Activated naive CD4-positive, alpha-beta T cell treated with anti-CD3 and anti-CD28 coated beads for 36 hours (primary cell): ENCODE measurements at regions of chr1 and their contacts with region 1.

Region 1: DNA sequence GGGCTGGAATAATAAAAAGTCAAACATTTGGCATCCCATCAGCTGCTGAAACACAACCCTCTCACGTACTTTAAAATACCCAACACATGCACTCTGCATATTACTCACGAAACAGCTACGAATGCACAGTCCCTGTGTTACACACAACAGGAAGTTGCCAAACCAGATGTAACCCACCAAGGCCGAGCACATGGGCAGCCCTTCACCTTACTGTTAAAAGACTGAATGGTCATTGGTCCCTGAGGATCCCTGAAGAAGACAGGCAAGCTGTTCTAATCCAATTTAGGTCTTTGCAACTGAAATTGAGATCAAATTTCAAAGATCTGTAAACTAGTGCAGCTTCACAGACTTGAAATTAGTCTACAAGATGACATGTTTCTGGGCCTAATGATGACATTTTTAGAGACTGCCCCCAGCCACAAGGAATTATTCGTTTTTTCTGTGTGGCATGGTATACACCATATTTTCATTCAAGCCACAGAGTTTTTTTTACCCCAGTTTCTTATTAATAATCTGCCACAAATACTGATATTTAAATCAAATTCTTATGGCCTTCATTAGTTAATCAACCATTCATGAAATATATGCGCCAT is 25.6 kb upstream of the IER5 start:
- DNase-seq: peak; percentile 57
- H3K4me3 Mint-ChIP-seq: peak overlapping the region; percentile 22
- H3K27ac Mint-ChIP-seq: peak overlapping the region; percentile 3
- H3K4me1 Mint-ChIP-seq: peaks cover 17% of the 10 kb centered on the region
- H3K27me3 Mint-ChIP-seq: no peaks in the 10 kb centered on the region

Region 2: GRCh38 chr1:181152892-181153633 is 90.1 kb after region 1 on chr1:
- CTCF ChIA-PET with region 1: no interaction called
- intact Hi-C with region 1: loop called (anchors 1 kb)
- DNase-seq: no peak
- H3K4me3 Mint-ChIP-seq: no peak overlapping the region
- H3K27ac Mint-ChIP-seq: no peak overlapping the region
- H3K4me1 Mint-ChIP-seq: peaks cover 37% of the 10 kb centered on the region
- H3K27me3 Mint-ChIP-seq: no peaks in the 10 kb centered on the region